ENCODE measurements at regions of chr3 and their contacts with region 1.

Region 1: DNA sequence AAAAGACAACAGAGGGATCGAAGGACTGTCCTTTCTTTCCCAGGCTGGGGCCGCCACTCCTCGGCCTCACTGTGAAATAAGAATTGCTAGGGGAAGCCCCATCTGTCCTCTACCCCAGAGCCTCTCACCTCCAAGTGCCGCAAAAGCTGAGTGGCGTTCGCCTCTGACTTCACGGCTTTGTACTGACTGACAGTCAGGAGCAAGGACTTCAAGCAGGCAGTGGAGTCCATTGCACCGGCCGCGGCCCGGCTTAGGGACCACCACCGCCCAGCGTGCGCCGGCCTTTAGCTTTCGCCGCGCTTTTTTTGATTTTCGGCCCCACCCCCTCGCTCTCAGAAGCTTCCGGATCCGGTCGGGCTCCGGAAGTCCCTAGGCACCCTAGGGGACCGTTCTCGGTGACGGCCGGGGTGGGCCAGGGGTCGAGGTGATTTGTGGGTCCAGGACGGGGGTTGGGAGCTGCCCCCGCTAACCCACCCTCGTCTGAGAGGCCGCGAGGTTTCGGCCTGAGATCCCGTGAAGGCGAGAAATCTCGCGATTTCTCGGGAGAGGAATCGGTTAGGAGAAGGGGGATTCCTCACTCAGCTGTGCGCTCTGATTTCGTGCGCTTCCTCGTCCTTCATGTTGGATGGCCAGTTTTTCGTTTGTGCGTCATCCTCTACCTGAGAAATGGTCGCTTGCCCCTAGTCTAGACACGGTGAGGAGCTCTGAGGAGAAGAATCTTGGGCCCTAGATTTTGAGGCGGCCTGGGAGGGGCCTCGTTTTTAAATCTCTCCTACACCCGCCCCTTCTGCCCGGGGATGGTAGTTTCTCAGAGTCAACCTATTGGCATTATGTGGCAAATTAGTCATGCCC is at the starts of genes CIP2A and DZIP3:
- DNase-seq: peak; percentile 96 to 98 (median 97)
- H3K4me3 ChIP-seq: peak within 1 kb of the TSS; percentile 94 to 100 (median 97)
- H3K27ac ChIP-seq: peak within 1 kb of the TSS; percentile 93 to 96
- H3K4me1 ChIP-seq: peaks cover 7 to 25% (median 16%) of the 10 kb centered on the region in 4 experiments
- H3K27me3 ChIP-seq: no peaks in the 10 kb centered on the region

Region 2: GRCh38 chr3:108602249-108602934 is 13.0 kb after region 1 on chr3:
- CTCF ChIA-PET with region 1: interaction called, 35 read pairs
- POLR2A ChIA-PET with region 1: interaction called, 7 read pairs
- DNase-seq: peak; percentile 27 to 77 (median 68)
- H3K4me3 ChIP-seq: peak overlapping the region in 5 of 7 experiments; percentile 1 to 63 (median 16)
- H3K27ac ChIP-seq: peak overlapping the region; percentile 72 to 78
- H3K4me1 ChIP-seq: peaks cover 9 to 26% (median 17%) of the 10 kb centered on the region in 4 experiments
- H3K27me3 ChIP-seq: no peaks in the 10 kb centered on the region

Region 3: DNA sequence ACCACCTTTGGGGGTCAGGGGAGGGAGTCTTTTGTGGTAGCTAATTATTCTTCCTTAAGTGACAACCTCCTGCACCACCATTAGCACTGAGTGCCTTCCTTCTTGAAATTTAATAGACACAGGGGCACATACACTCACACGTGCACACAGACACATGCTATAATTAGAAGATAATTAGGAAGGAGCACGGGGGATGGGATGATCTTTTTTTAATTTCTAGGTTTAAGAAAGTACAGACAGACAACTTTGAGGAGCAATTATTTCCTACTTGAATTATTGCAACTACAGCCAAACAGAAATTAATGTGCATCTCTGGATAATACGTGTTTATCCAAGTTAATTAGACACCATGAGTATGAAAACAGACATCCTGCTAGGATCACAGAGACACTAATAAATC is 409.1 kb after region 1 on chr3:
- CTCF ChIA-PET with region 1: no interaction called
- POLR2A ChIA-PET with region 1: no interaction called
- DNase-seq: no peak
- H3K4me3 ChIP-seq: no peak overlapping the region
- H3K27ac ChIP-seq: no peak overlapping the region
- H3K4me1 ChIP-seq: no peaks in the 10 kb centered on the region
- H3K27me3 ChIP-seq: no peaks in the 10 kb centered on the region